Heart left ventricle (tissue), 16 donors: ENCODE measurements at regions of chr10 and their contacts with region 1.

Region 1: DNA sequence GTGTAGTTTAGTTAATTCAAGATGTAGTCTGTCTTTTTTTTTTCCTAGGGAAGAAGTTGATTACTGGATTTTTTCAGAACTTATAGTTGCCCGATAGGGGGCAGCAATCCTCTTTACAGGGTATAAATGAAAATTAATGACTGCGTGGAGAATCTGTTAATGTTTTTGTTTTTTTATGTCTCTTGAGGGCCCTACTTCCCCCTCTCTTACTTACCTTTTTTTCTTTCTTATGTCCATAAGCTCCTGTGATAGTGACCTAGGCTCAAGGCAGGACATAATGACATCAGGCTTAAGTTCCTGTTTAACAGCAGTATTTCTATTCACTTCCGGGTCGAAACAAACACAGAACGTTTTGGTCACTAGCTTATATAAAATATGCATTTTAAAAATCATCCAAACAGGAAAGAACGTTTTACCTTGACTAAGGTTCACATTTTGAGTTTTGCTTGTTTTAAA is 18.8 kb downstream of the CDC123 start:
- DNase-seq: no peak
- ATAC-seq: peak in 2 of 4 donors; percentile 22 to 34
- H3K4me3 ChIP-seq: peak overlapping the region in 5 of 12 donors; percentile 11 to 35 (median 14)
- H3K27ac ChIP-seq: peak overlapping the region in 2 of 12 donors; percentile 33 to 45
- H3K4me1 ChIP-seq: peaks cover 0 to 21% (median 10%) of the 10 kb centered on the region in 12 donors
- H3K27me3 ChIP-seq: no peaks in the 10 kb centered on the region
- CTCF ChIP-seq: peak; percentile 60 to 78 (median 70)
- POLR2A ChIP-seq: no peak

Region 2: DNA sequence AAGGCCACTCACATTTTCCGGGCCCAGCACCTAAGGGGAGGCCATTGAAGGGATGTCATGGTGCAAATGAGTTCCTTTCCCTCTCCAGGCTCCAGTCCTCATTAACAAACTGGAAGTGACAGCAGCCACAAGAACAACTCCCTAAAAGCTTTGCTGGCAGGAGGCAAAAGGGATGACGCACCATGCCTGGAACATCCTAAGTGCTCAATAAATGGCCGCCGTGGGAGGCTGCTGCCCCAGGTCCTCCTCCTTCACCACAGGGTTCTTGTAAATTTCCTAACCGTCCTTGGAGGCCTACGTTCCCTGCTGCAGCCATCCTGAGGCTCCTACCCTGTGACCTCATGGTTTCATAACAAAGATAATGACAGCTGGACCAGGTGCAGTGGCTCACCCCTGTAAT is 93.3 kb after region 1 on chr10:
- intact Hi-C with region 1: no loop called
- DNase-seq: no peak
- ATAC-seq: no peak
- H3K4me3 ChIP-seq: no peak overlapping the region
- H3K27ac ChIP-seq: no peak overlapping the region
- H3K4me1 ChIP-seq: no peaks in the 10 kb centered on the region
- H3K27me3 ChIP-seq: no peaks in the 10 kb centered on the region
- CTCF ChIP-seq: no peak
- POLR2A ChIP-seq: no peak

Region 3: GRCh38 chr10:12656518-12657142 is 441.8 kb after region 1 on chr10:
- intact Hi-C with region 1: loop called in 1 of 10 experiments (anchors 10 kb)
- DNase-seq: no peak
- ATAC-seq: peak in 1 of 4 donors; percentile 45
- H3K4me3 ChIP-seq: no peak overlapping the region
- H3K27ac ChIP-seq: no peak overlapping the region
- H3K4me1 ChIP-seq: no peaks in the 10 kb centered on the region
- H3K27me3 ChIP-seq: no peaks in the 10 kb centered on the region
- CTCF ChIP-seq: peak; percentile 55 to 70 (median 63)
- POLR2A ChIP-seq: no peak